Heart left ventricle (tissue), 16 donors: ENCODE measurements at regions of chr16 and their contacts with region 1.

Region 1: GRCh38 chr16:2537453-2538379 is at the start of gene PDPK1:
- DNase-seq: peak; percentile 95 to 98 (median 96)
- ATAC-seq: peak; percentile 90 to 96 (median 94)
- H3K4me3 ChIP-seq: peak within 1 kb of the TSS; percentile 64 to 93 (median 79)
- H3K27ac ChIP-seq: peak within 1 kb of the TSS; percentile 70 to 95 (median 91)
- H3K4me1 ChIP-seq: peaks cover 4 to 61% (median 36%) of the 10 kb centered on the region in 12 donors
- H3K27me3 ChIP-seq: no peaks in the 10 kb centered on the region
- CTCF ChIP-seq: no peak
- POLR2A ChIP-seq: peak in 1 of 2 donors; percentile 50
- total RNA-seq, gene PDPK1: 29.1 to 54.1 (median 40.4) TPM

Region 2: GRCh38 chr16:2518887-2519710 is 18.6 kb before region 1 on chr16:
- intact Hi-C with region 1: loop called in 1 of 10 experiments (anchors 1 kb)
- DNase-seq: peak in 3 of 5 donors; percentile 21 to 66 (median 48)
- ATAC-seq: no peak
- H3K4me3 ChIP-seq: peak overlapping the region in 10 of 12 donors; percentile 58 to 90 (median 68)
- H3K27ac ChIP-seq: peak overlapping the region in 11 of 12 donors; percentile 73 to 99 (median 85)
- H3K4me1 ChIP-seq: peaks cover 22 to 66% (median 58%) of the 10 kb centered on the region in 12 donors
- H3K27me3 ChIP-seq: no peaks in the 10 kb centered on the region
- CTCF ChIP-seq: no peak
- POLR2A ChIP-seq: no peak